ENCODE measurements at regions of chr4 and their contacts with region 1.

Region 1: GRCh38 chr4:138242076-138242833 is at the start of gene SLC7A11:
- DNase-seq: peak; percentile 97
- H3K4me3 ChIP-seq: peak within 1 kb of the TSS; percentile 76
- H3K27ac ChIP-seq: peak within 1 kb of the TSS; percentile 91
- H3K4me1 ChIP-seq: peaks cover 30% of the 10 kb centered on the region
- CTCF ChIP-seq: no peak
- total RNA-seq, gene SLC7A11: 5.2 and 5.7 TPM in 2 replicates

Region 2: DNA sequence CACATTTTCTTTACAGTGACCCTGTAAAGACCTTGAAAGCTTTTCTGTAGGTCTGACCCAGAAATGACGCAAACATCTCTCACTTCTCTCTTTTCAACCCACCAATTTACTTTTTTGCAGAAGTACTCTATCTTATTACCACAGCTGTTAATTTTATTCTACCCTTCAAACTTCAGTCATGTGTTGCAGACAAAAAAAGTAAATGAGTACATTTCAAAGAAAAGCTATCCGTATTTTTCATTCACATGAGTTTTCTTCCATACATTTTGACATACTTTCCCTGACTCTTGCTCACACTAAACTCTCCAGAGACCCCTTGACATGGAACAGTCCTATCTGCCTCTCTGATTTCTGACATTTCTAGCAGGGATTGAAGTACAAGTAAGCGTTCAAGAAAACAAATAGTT is 51.8 kb before region 1 on chr4:
- CTCF ChIA-PET with region 1: interaction called, 3 read pairs
- POLR2A ChIA-PET with region 1: interaction called, 46 read pairs
- intact Hi-C with region 1: loop called (anchors 1 kb)
- DNase-seq: peak; percentile 84
- H3K4me3 ChIP-seq: peak overlapping the region; percentile 47
- H3K27ac ChIP-seq: peak overlapping the region; percentile 93
- H3K4me1 ChIP-seq: peaks cover 46% of the 10 kb centered on the region
- CTCF ChIP-seq: no peak

Region 3: GRCh38 chr4:138414202-138414601 is 171.9 kb after region 1 on chr4:
- CTCF ChIA-PET with region 1: no interaction called
- POLR2A ChIA-PET with region 1: no interaction called
- intact Hi-C with region 1: no loop called
- DNase-seq: no peak
- H3K4me3 ChIP-seq: no peak overlapping the region
- H3K27ac ChIP-seq: no peak overlapping the region
- H3K4me1 ChIP-seq: no peaks in the 10 kb centered on the region
- CTCF ChIP-seq: no peak

Region 4: DNA sequence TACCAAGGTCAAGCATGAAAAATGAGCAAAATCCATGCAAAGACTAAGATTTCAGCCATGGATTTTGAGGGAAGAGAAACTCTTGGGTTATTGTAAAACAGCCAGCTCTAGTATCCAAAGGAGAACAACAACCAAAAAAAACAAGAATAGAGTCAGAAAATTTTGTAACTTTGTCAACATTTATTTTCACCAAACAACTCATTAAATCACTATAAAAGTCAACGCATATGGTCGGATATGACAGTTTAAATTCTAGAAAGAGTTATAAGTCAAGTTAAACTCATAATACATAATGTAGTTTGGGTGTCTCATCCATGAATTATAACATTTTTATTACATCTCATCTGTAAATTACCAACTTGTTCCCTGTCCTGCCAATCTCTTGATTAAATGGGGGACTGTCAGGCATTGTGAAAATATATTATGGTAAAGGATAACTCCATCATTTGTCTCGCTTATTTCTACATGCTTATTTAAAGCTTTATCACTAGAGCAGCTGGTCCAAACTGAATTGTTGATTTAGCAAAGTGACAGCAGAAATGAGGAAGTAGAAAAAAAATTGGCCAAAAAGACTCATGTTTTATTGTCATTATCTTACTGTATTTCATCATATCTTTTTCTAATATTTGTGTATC is 548.6 kb after region 1 on chr4:
- CTCF ChIA-PET with region 1: no interaction called
- POLR2A ChIA-PET with region 1: no interaction called
- intact Hi-C with region 1: no loop called
- DNase-seq: no peak
- H3K4me3 ChIP-seq: no peak overlapping the region
- H3K27ac ChIP-seq: no peak overlapping the region
- H3K4me1 ChIP-seq: no peaks in the 10 kb centered on the region
- CTCF ChIP-seq: no peak

Measured in OCI-LY7 (cell line).